Aorta (tissue), 5 donors: ENCODE measurements at regions of chr1 and their contacts with region 1.

Region 1: GRCh38 chr1:64038965-64039926 is 164.2 kb upstream of the UBE2U start:
- DNase-seq: peak in 1 of 2 donors; percentile 60
- ATAC-seq: peak; percentile 82
- H3K4me3 ChIP-seq: no peak overlapping the region
- H3K27ac ChIP-seq: peak overlapping the region; percentile 47 to 66
- H3K4me1 ChIP-seq: peaks cover 23 to 30% of the 10 kb centered on the region in 2 donors
- H3K27me3 ChIP-seq: no peaks in the 10 kb centered on the region

Region 2: DNA sequence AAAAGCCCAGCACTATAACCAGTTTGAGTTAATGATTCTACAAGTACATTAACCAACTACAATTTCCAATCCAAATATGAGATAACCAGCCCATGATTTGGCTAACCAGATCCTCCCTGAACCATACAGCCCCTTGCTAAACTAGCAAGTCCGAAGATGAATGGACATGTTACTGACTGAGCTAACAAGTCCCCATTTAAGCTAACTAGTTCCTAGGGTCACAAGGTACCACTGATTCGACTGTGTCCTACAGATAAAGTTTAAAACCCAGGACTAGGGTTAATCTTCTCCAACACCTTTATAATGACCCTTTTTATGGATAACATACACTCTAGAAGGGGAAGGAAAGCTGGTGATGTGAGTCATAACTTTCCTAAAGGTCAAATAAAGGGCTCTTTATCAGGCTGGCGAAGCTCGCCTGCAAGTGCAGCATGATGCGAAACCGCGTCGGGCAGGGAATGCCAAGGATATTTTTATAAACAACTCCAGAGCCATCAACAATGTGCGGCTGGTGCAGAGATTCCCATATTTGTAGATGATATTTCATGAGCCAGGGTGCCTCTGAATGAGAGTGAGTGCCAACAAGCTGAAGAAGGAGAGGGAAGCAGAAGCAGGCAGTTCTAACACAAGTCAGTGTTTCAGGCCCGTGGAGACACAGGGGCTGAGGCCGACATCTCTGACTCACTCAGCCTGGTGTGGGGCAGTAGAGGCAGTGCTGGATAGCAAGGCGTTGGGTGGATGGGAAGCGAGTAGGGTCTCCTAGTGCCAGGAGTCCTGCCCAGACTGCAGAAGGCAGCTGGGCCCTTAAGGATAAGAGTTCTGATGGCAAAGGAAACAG is 341.0 kb before region 1 on chr1:
- intact Hi-C with region 1: loop called (anchors 5 kb)
- DNase-seq: peak; percentile 80 to 90
- ATAC-seq: peak; percentile 85
- H3K4me3 ChIP-seq: no peak overlapping the region
- H3K27ac ChIP-seq: peak overlapping the region; percentile 92 to 95
- H3K4me1 ChIP-seq: peaks cover 2 to 6% of the 10 kb centered on the region in 2 donors
- H3K27me3 ChIP-seq: no peaks in the 10 kb centered on the region

Region 3: GRCh38 chr1:63946866-63947491 is 92.3 kb before region 1 on chr1:
- intact Hi-C with region 1: loop called in 1 of 2 experiments (anchors 5 kb)
- DNase-seq: peak; percentile 89 to 92
- ATAC-seq: peak; percentile 87
- H3K4me3 ChIP-seq: no peak overlapping the region
- H3K27ac ChIP-seq: peak overlapping the region; percentile 97 to 100
- H3K4me1 ChIP-seq: peaks cover 22 to 31% of the 10 kb centered on the region in 2 donors
- H3K27me3 ChIP-seq: no peaks in the 10 kb centered on the region

Region 4: GRCh38 chr1:63975481-63975880 is 63.8 kb before region 1 on chr1:
- intact Hi-C with region 1: loop called in 1 of 2 experiments (anchors 5 kb)
- DNase-seq: no peak
- ATAC-seq: peak; percentile 23
- H3K4me3 ChIP-seq: peak overlapping the region in 1 of 2 donors; percentile 24
- H3K27ac ChIP-seq: peak overlapping the region; percentile 39 to 83
- H3K4me1 ChIP-seq: peaks cover 4 to 16% of the 10 kb centered on the region in 2 donors
- H3K27me3 ChIP-seq: no peaks in the 10 kb centered on the region

Region 5: GRCh38 chr1:64092851-64093371 is 53.7 kb after region 1 on chr1:
- intact Hi-C with region 1: loop called in 1 of 2 experiments (anchors 5 kb)
- DNase-seq: no peak
- ATAC-seq: peak; percentile 50
- H3K4me3 ChIP-seq: no peak overlapping the region
- H3K27ac ChIP-seq: peak overlapping the region; percentile 63 to 76
- H3K4me1 ChIP-seq: peaks cover 0 to 14% of the 10 kb centered on the region in 2 donors
- H3K27me3 ChIP-seq: no peaks in the 10 kb centered on the region

Region 6: GRCh38 chr1:64136752-64137411 is 97.6 kb after region 1 on chr1:
- intact Hi-C with region 1: loop called (anchors 5 kb)
- DNase-seq: peak; percentile 73 to 86
- ATAC-seq: peak; percentile 93
- H3K4me3 ChIP-seq: no peak overlapping the region
- H3K27ac ChIP-seq: no peak overlapping the region
- H3K4me1 ChIP-seq: peaks cover 0 to 4% of the 10 kb centered on the region in 2 donors
- H3K27me3 ChIP-seq: no peaks in the 10 kb centered on the region

Region 7: GRCh38 chr1:64337475-64337874 is 298.2 kb after region 1 on chr1:
- intact Hi-C with region 1: no loop called
- DNase-seq: no peak
- ATAC-seq: no peak
- H3K4me3 ChIP-seq: no peak overlapping the region
- H3K27ac ChIP-seq: no peak overlapping the region
- H3K4me1 ChIP-seq: peaks cover 0 to 2% of the 10 kb centered on the region in 2 donors
- H3K27me3 ChIP-seq: peaks cover 0 to 1% of the 10 kb centered on the region in 2 donors